Mammary epithelial cell (primary cell): ENCODE measurements at regions of chr6 and their contacts with region 1.

Region 1: DNA sequence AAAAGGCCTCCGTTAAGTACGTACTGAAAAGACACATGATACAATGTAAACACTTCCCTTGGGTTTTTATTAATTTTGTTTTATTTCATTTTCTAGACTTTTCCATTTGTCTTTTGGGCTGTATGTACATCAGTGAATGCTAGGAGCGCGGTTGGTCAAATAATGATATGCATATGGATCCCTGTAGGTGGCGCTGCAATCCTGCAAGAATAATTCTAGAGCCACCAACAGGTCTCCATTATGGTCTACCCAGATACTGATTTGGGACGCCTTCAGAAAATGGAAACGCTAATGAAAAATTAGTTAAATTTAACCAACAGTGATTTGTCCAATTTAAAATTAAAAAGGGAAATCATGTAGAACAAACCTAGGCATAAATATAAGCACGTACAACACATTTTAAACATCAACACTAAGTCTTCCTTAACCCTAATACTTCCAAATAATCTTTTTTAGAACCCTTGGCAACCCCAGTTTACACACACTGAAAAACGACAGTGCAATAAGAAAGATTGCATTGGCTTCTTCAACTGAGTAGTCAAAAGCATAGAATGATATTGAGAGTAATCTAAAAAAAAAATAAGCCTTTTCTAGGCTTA is 433.5 kb downstream of the RFPL4B start:
- DNase-seq: peak; percentile 61
- H3K4me3 ChIP-seq: no peak overlapping the region
- H3K27ac ChIP-seq: no peak overlapping the region
- H3K4me1 ChIP-seq: no peaks in the 10 kb centered on the region
- H3K27me3 ChIP-seq: no peaks in the 10 kb centered on the region
- CTCF ChIP-seq: peak; percentile 53 to 81

Region 2: GRCh38 chr6:112735129-112735528 is 45.5 kb before region 1 on chr6:
- CTCF ChIA-PET with region 1: no interaction called
- dilution Hi-C with region 1: no loop called
- in situ Hi-C with region 1: no loop called
- intact Hi-C with region 1: no loop called
- DNase-seq: no peak
- H3K4me3 ChIP-seq: no peak overlapping the region
- H3K27ac ChIP-seq: no peak overlapping the region
- H3K4me1 ChIP-seq: no peaks in the 10 kb centered on the region
- H3K27me3 ChIP-seq: no peaks in the 10 kb centered on the region
- CTCF ChIP-seq: no peak

Region 3: DNA sequence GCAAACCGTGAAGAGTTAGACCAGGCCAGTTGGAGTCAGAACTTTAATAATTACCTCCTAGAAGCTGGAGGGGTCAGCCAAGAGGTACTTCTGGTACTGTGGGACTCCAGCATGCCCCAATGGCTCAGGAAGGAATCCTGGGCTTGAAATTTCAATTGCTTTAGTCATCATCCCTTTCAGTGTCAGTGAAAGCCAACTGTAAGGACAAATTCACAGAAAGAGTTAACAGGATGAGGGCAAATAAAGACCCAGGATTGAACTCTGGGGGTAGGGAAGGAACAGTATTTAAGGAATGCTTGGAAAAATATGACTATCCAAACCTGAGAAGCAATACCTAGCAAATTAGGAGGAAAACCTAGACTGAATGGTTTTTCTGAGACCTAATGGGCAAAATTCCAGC is 341.5 kb after region 1 on chr6:
- CTCF ChIA-PET with region 1: no interaction called
- dilution Hi-C with region 1: no loop called
- in situ Hi-C with region 1: no loop called
- intact Hi-C with region 1: loop called (anchors 2 kb)
- DNase-seq: peak; percentile 77
- H3K4me3 ChIP-seq: no peak overlapping the region
- H3K27ac ChIP-seq: no peak overlapping the region
- H3K4me1 ChIP-seq: peaks cover 24% of the 10 kb centered on the region
- H3K27me3 ChIP-seq: no peaks in the 10 kb centered on the region
- CTCF ChIP-seq: peak; percentile 43 to 54

Region 4: DNA sequence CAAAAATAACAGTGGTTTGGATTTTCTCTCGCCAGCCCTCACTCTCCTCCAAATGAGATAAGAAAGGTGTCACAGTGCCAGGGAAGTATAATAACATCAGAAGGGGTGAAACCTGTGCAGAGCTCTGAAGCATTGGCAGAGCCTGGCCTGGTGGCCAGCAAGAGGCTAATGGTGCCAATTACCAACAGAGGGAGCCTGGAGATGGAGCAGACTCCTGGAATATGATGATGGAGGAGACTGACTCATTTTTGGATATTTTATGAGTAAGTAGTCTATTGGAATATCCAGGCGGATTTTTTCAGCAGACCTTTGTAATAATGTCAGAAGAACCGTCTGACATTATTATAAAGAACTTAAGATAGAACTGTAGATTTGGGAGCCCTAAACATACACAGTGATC is 633.9 kb after region 1 on chr6:
- CTCF ChIA-PET with region 1: no interaction called
- dilution Hi-C with region 1: no loop called
- in situ Hi-C with region 1: no loop called
- intact Hi-C with region 1: loop called (anchors 5 kb)
- DNase-seq: peak; percentile 76
- H3K4me3 ChIP-seq: no peak overlapping the region
- H3K27ac ChIP-seq: no peak overlapping the region
- H3K4me1 ChIP-seq: peaks cover 13% of the 10 kb centered on the region
- H3K27me3 ChIP-seq: no peaks in the 10 kb centered on the region
- CTCF ChIP-seq: peak; percentile 60 to 84

Region 5: DNA sequence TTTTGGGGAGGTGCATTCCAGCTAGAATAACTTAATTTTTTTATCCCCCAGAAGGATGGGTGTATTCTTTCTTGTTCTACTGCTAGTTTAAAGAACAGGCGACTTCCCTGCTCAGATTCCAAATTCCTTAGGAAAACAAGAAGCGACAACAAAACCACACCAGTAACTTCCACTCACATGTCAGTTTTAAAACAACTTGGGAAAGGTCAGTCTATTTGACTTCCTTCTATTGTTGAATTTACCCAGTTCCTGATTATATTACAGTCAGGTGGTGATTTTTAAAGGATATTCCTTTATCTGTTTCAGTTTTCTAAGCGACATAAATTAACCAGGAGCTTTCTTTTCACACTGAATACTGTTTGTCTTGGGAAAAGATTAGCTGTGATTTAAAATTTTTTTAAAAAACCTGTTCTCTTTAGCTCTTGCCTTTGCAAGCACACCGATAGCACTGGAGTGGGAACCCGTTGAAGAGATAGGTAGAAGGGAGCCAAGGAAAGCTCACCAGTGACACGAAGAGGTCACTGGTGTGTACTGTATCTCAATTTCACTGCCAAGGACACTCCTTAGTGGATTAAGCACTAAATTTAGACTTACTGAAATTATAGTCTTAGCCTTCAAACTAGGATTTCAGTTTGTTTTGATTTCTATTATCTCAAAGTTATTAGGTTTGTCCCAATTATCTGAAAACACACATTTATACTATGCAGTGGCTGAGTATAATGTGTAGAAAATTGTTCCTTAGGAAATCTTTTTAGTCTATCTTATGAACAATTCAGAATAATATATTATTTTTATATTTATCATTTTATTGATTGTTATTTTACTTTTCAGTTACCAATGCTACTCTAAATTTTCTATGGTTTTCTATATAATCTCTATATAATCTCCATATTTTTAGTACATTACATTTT is 1098.8 kb after region 1 on chr6:
- CTCF ChIA-PET with region 1: no interaction called
- dilution Hi-C with region 1: no loop called
- in situ Hi-C with region 1: loop called (anchors 10 to 25 kb)
- intact Hi-C with region 1: loop called (anchors 2 kb)
- DNase-seq: peak; percentile 64
- H3K4me3 ChIP-seq: no peak overlapping the region
- H3K27ac ChIP-seq: no peak overlapping the region
- H3K4me1 ChIP-seq: peaks cover 6% of the 10 kb centered on the region
- H3K27me3 ChIP-seq: no peaks in the 10 kb centered on the region
- CTCF ChIP-seq: peak; percentile 71 to 87

Region 6: DNA sequence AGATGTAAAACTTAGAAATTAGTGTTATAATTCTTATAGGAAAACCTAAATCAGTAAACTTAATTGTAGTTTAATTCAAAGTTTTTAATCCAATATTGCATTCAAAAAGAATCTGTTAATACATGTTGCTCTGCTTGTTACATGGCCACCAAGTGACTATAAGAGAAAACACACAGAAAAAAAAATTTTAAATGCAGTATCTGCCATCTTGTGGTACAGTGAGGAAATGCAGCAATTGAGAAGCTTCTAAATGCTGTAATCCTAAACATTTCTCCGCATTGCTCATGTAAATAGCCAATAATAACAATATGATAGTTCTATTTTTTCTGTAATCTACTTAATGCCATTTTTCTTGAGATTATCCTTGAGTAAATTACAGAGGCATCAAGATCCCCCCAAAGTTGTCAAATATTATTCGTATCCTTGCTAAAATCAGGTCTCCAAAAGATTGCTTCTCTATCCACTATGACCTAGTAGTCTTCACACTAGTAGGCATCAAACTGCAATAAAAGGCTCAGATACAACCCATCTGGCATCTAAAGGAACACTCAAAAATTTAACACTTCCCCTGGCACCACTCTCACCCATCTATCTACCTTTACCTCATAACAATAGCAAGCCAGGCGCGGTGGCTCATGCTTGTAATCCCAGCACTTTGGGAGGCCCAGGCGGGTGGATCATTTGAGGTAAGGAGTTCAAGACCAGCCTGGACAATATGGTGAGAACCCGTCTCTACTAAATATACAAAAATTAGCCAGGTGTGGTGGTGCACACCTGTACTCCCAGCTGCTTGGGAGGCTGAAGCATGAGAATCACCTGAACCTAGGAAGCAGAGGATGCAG is 1155.7 kb after region 1 on chr6:
- CTCF ChIA-PET with region 1: no interaction called
- dilution Hi-C with region 1: no loop called
- in situ Hi-C with region 1: no loop called
- intact Hi-C with region 1: loop called (anchors 1 kb)
- DNase-seq: peak; percentile 30
- H3K4me3 ChIP-seq: no peak overlapping the region
- H3K27ac ChIP-seq: no peak overlapping the region
- H3K4me1 ChIP-seq: no peaks in the 10 kb centered on the region
- H3K27me3 ChIP-seq: no peaks in the 10 kb centered on the region
- CTCF ChIP-seq: peak; percentile 70 to 85